Prostate gland (tissue), 2 donors: ENCODE measurements at regions of chr17 and their contacts with region 1.

Region 1: GRCh38 chr17:39153599-39154051 is 2.2 kb upstream of the PLXDC1 start:
- DNase-seq: peak; percentile 91
- H3K4me3 ChIP-seq: peak overlapping the region; percentile 50 to 62
- H3K27ac ChIP-seq: peak overlapping the region; percentile 90 to 93
- H3K4me1 ChIP-seq: no peaks in the 10 kb centered on the region
- H3K27me3 ChIP-seq: no peaks in the 10 kb centered on the region
- CTCF ChIP-seq: peak in 3 of 4 experiments; percentile 30 to 59 (median 41)
- POLR2A ChIP-seq: no peak

Region 2: GRCh38 chr17:38752119-38752929 is 401.3 kb before region 1 on chr17 and contains the start of gene PSMB3:
- intact Hi-C with region 1: loop called (anchors 10 kb)
- DNase-seq: peak; percentile 99
- H3K4me3 ChIP-seq: peak within 1 kb of the TSS; percentile 90 to 99
- H3K27ac ChIP-seq: peak within 1 kb of the TSS; percentile 76 to 95
- H3K4me1 ChIP-seq: peaks cover 8% of the 10 kb centered on the region
- H3K27me3 ChIP-seq: no peaks in the 10 kb centered on the region
- CTCF ChIP-seq: peak in 1 of 4 experiments; percentile 22
- POLR2A ChIP-seq: peak; percentile 11
- total RNA-seq, gene PSMB3: 116 to 192 TPM

Region 3: DNA sequence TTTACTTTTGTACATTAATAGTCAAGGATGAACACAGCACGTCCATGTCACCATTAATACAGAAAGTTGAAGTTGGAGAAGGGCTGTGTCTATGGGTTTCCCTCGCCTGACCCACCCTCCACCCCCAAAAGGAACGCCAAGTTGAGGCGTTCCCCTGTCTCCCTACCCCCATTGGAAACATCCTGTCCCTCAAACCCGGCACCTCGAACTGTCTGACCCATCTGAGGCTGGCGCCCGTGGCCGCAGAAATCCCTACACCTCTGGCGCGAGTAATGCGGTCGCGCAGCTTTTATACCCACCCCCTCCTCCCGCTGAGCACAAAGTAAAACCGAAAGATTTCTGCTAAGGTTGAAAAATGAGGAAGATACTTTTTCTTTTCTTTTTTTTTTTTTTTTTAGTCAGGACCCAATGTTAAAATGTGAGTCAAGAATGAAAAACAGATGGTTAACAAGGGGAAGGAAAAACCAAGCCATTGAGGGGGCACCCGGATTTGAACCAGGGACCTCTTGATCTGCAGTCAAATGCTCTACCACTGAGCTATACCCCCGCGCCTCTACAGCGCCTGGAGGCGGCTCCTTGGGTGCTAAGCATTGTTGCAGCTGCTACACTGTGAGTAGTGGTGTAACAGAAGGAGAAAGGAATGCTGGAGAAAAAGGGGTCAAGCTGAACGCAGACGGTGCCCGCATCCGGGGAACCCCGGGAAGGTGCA is 284.7 kb before region 1 on chr17:
- intact Hi-C with region 1: loop called (anchors 5 kb)
- DNase-seq: peak; percentile 85
- H3K4me3 ChIP-seq: peak overlapping the region; percentile 84 to 93
- H3K27ac ChIP-seq: peak overlapping the region; percentile 97
- H3K4me1 ChIP-seq: peaks cover 15% of the 10 kb centered on the region
- H3K27me3 ChIP-seq: no peaks in the 10 kb centered on the region
- CTCF ChIP-seq: no peak
- POLR2A ChIP-seq: no peak

Region 4: GRCh38 chr17:38982858-38983746 is 170.5 kb before region 1 on chr17:
- intact Hi-C with region 1: loop called (anchors 5 kb)
- DNase-seq: peak; percentile 43
- H3K4me3 ChIP-seq: no peak overlapping the region
- H3K27ac ChIP-seq: no peak overlapping the region
- H3K4me1 ChIP-seq: no peaks in the 10 kb centered on the region
- H3K27me3 ChIP-seq: no peaks in the 10 kb centered on the region
- CTCF ChIP-seq: peak; percentile 58 to 85 (median 70)
- POLR2A ChIP-seq: no peak

Region 5: DNA sequence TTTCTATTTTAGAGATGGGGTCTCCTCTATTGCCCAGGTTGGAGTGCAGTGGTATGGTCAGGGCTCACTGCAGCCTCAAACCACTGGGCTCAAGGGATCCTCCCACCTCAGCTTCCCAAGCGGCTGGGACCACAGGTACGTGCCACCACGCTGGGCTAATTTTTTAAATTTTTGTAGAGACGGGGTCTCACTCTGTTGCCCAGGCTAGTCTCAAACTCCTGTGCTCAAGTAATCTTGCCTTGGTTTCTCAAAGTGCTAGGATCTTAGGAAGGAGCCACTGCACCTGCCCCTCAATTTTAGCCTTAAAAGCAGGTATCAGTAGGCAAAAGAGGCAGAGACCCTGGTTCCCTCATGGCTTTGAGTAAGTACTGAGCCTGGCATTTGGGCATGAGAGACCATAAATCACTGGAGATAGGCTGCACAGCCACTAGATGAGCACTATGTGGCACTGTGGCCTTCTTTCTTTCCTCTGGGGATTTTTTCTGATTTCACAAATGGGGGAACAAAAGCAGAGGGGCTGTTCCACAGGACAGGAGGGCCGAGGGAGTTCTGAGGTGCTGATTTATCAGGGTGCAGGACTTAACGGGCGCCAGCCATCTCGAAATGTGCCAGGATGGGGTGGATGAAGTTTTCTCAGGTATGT is 84.4 kb before region 1 on chr17:
- intact Hi-C with region 1: loop called (anchors 5 kb)
- DNase-seq: peak; percentile 15
- H3K4me3 ChIP-seq: no peak overlapping the region
- H3K27ac ChIP-seq: no peak overlapping the region
- H3K4me1 ChIP-seq: no peaks in the 10 kb centered on the region
- H3K27me3 ChIP-seq: no peaks in the 10 kb centered on the region
- CTCF ChIP-seq: peak in 3 of 4 experiments; percentile 21 to 64 (median 61)
- POLR2A ChIP-seq: no peak

Region 6: GRCh38 chr17:39115135-39115534 is 38.5 kb before region 1 on chr17:
- intact Hi-C with region 1: no loop called
- DNase-seq: no peak
- H3K4me3 ChIP-seq: no peak overlapping the region
- H3K27ac ChIP-seq: no peak overlapping the region
- H3K4me1 ChIP-seq: no peaks in the 10 kb centered on the region
- H3K27me3 ChIP-seq: no peaks in the 10 kb centered on the region
- CTCF ChIP-seq: no peak
- POLR2A ChIP-seq: no peak

Region 7: DNA sequence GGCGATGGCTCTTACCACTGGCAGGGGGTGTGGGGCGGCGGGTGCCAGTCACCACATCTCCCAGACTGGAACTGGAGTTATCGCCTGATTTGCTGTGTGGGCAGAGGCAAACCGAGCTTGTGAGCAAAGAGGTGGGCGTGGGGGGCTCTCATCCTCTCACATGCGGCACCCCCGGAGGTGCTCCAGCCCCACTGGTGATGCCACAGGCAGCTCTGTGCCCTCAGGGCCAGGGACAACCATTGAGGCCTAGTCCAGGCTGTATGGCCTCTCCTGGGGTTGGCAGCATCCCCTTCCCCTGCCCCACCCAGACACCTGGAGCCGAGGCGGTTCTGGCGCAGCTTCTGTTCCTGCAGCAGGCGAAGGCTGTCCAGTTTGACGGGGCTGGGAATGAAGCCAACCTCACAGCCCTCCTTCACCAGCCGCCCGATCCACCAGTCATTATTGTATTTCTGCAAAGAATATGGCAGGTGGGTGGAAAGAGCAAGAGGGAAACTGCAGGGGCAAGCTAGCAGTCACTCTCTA is 32.9 kb after region 1 on chr17:
- intact Hi-C with region 1: no loop called
- DNase-seq: no peak
- H3K4me3 ChIP-seq: no peak overlapping the region
- H3K27ac ChIP-seq: no peak overlapping the region
- H3K4me1 ChIP-seq: no peaks in the 10 kb centered on the region
- H3K27me3 ChIP-seq: no peaks in the 10 kb centered on the region
- CTCF ChIP-seq: no peak
- POLR2A ChIP-seq: no peak

Region 8: DNA sequence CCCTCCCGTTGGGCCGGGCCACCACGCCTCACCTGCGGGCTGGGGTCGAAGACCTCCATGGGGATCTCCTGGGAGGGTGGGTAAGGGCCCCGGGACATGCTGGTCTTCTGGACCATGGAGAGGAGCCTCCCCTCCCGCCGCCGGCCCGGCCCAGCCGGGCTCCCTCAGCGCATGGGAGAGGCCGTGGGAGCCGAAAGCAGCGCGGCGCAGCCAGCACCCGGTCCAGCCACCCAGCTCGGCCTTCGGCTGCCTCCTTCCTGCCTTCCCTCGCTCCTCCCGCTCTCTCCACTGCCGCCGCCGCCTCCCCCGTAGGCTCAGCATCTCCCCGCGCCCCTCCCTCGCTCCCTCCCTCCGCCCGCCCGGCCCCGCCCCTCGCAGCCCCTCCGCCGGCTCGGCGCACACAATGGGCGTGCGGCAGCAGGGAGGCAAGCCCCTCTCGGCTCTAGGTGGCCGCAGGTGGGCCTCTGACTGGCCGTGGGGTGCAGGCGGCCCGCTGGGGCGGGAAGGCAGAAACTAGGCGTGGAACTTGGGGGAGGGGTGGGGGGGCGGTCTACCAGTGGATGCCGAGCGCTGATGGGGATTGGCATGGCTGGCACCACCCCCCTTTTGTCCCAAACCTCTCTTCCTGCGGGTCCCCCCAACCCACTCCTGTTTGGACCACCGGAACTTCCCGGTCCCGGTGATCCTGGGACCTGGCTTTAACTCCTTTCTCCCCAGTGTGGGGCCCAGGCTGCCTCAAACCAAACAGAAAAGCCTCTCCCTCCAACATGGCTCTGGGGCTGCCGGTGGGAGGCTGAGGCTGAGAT is 44.0 kb after region 1 on chr17 and contains the start of gene CACNB1:
- intact Hi-C with region 1: loop called (anchors 2 kb)
- DNase-seq: peak; percentile 56
- H3K4me3 ChIP-seq: peak within 1 kb of the TSS; percentile 60 to 67
- H3K27ac ChIP-seq: peak within 1 kb of the TSS; percentile 61 to 75
- H3K4me1 ChIP-seq: peaks cover 6% of the 10 kb centered on the region
- H3K27me3 ChIP-seq: no peaks in the 10 kb centered on the region
- CTCF ChIP-seq: no peak
- POLR2A ChIP-seq: peak; percentile 63
- total RNA-seq, gene CACNB1: 3.4 to 17.8 TPM